OCI-LY7 (cell line): ENCODE measurements at regions of chr13 and their contacts with region 1.

Region 1: DNA sequence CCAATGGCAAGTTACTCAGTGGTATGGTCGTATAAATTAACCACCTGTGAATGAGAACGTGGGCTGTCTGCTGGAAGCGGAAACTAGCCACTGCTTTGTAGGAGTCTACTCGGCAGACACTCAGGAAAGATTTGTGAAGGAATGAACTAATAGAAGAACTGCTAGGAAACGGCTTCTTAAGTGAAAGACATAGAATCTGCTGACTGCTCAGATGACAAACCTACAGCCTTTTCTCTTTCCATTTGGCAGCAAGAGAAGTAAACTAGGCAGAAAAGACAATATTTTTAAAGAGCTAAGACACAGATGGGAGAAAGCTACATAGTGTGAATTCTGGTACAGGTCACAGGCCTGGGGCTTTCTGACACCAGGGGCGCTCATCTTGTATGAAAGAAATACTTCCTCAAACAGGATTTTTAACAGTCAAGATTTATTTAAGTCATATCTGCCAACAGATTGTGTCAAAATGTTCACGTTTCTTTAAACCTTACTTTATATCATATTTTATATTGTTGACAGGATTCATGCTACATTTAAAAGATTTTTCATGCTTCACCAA is 78.4 kb downstream of the MIPEP start:
- DNase-seq: peak; percentile 75
- H3K4me3 ChIP-seq: no peak overlapping the region
- H3K27ac ChIP-seq: peak overlapping the region; percentile 44
- H3K4me1 ChIP-seq: peaks cover 56% of the 10 kb centered on the region
- CTCF ChIP-seq: peak; percentile 86

Region 2: GRCh38 chr13:23776698-23777574 is 33.8 kb before region 1 on chr13:
- CTCF ChIA-PET with region 1: no interaction called
- POLR2A ChIA-PET with region 1: interaction called, 3 read pairs
- intact Hi-C with region 1: loop called (anchors 1 kb)
- DNase-seq: peak; percentile 78
- H3K4me3 ChIP-seq: peak overlapping the region; percentile 35
- H3K27ac ChIP-seq: peak overlapping the region; percentile 77
- H3K4me1 ChIP-seq: peaks cover 33% of the 10 kb centered on the region
- CTCF ChIP-seq: no peak

Region 3: DNA sequence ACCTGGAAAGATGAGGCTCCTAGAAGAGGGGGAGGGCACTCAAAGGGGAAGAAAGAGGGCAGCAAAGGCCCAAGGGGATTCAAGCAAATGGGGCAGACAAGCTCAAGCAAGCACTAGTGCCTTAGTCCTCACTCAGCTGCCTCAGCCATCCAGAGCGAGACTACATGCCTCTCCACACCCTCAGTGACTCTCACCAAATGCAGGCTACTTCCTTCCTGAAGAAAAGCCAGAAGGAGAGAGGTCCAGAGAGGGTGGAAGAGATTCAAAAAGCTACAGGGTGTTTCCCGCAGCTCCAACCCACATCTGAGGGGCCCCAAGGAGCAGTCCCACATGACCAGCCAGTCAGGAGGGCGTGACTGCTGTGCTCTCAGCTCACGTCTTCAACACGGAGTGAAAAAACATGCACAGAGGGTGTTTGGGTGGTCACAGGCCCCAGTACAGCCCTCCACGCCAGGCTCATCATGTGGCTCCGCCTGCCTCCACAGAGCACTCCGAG is 37.9 kb after region 1 on chr13:
- CTCF ChIA-PET with region 1: no interaction called
- POLR2A ChIA-PET with region 1: interaction called, 10 read pairs
- intact Hi-C with region 1: loop called (anchors 1 kb)
- DNase-seq: peak; percentile 53
- H3K4me3 ChIP-seq: no peak overlapping the region
- H3K27ac ChIP-seq: no peak overlapping the region
- H3K4me1 ChIP-seq: peaks cover 28% of the 10 kb centered on the region
- CTCF ChIP-seq: no peak

Region 4: DNA sequence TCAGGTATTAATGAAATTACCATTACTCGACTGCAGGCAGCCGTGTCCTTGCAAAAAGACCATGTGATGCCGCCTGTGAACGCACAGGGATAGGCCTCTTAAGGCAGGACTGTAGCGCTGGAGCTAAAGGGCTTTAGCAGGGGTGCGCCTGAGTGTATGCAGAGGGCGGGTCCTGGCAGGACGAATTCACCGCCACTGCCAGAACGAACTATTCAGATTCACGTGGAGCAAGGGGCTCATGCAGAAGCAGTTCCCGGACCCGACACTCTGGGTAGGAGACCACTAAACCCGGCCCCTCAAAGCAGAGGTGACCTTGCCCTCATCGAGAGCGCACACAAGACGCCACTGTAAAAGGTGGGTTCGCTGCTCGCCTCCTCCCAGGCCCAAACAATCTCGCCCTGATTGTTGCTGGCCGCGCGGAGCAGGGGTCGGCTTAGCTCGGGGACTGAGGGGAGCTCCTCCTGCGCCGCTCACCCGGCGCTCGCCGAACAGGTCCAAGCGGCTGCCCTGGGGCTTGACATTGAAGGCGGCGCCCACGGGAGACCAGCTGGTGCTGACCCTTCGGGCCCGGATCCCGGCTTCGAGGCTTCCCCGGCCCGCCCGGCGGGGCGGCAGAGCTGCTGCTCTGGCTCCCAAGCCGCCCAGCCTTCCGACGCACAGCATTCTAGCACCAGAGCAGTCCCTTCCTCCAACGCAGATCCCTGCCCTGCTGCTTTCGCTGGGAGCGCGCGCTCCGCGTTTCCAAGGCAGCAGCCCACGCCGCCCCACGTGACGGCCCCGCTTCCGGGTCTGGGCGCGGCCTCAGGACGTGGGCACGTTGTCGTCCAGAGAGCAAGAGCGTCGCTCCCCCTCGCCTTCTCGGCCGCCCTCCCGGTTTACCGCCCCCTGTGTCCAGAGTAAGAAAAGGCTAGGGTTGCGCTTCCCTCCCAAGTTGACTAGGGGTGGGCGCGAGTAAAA is 78.2 kb after region 1 on chr13 and contains the start of gene MIPEP:
- CTCF ChIA-PET with region 1: no interaction called
- POLR2A ChIA-PET with region 1: no interaction called
- intact Hi-C with region 1: loop called (anchors 2 kb)
- DNase-seq: peak; percentile 95
- H3K4me3 ChIP-seq: peak within 1 kb of the TSS; percentile 92
- H3K27ac ChIP-seq: peak within 1 kb of the TSS; percentile 38
- H3K4me1 ChIP-seq: peaks cover 14% of the 10 kb centered on the region
- CTCF ChIP-seq: peak; percentile 80
- total RNA-seq, gene MIPEP: 13.5 and 15.5 TPM in 2 replicates

Region 5: DNA sequence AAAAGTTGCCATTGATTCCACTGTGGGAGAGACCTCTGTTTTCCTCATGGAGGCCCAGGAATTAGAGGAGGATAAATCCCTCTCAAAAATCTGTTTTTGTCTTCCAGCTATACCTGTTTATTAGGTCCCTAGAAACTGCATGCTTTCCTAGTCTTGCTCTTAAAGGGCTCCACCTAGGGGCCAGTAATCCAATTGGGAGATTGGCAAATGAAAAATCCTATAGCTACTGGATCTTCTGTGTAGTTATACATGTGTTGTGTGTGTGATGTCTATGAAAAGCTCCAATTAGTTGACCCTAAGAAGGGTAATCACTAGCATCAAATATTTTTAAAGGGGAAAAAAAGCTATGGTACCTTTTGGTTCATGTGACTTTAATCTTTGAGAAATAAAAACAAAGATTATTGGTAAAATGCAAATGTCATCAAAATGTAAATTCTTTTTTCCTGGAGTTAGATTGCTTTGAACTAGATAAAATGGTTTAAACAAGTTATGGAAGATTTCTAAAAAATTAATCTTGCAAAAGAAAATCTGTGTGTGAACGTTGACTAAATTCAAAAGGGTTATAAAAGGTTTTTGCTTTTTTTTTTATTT is 149.9 kb after region 1 on chr13:
- CTCF ChIA-PET with region 1: no interaction called
- POLR2A ChIA-PET with region 1: no interaction called
- intact Hi-C with region 1: no loop called
- DNase-seq: peak; percentile 27
- H3K4me3 ChIP-seq: no peak overlapping the region
- H3K27ac ChIP-seq: no peak overlapping the region
- H3K4me1 ChIP-seq: no peaks in the 10 kb centered on the region
- CTCF ChIP-seq: peak; percentile 83

Region 6: GRCh38 chr13:25365720-25366235 is 1555.0 kb after region 1 on chr13:
- CTCF ChIA-PET with region 1: no interaction called
- POLR2A ChIA-PET with region 1: no interaction called
- intact Hi-C with region 1: no loop called
- DNase-seq: no peak
- H3K4me3 ChIP-seq: no peak overlapping the region
- H3K27ac ChIP-seq: no peak overlapping the region
- H3K4me1 ChIP-seq: no peaks in the 10 kb centered on the region
- CTCF ChIP-seq: no peak